CD8-positive, alpha-beta T cell (primary cell): ENCODE measurements at regions of chr3 and their contacts with region 1.

Region 1: DNA sequence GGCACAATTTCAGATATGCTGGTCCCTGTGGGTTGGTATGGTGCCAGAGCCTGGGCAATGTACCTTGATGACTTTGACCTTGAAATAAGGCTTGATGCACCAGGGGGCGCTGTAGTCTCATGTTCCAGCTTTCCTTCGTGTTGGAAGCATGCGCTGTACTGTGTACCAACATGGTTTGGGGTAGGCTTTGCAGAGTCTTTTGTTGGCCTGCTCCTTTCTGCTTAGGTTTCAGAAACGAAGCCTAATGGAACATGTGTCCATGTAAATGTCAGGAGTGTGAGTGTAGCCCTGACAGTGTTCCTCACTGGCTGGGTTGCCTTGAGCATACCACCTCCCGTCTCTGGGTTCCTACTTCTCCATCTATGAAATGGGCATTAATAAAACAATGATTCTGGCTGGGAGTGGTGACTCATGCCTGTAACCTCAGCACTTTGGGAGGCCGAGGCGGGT is 3.6 kb upstream of the CCR4 start:
- DNase-seq: peak; percentile 82 to 96 (median 87)
- ATAC-seq: peak; percentile 79
- H3K4me3 ChIP-seq: no peak overlapping the region
- H3K4me3 Mint-ChIP-seq: no peak overlapping the region
- H3K27ac ChIP-seq: no peak overlapping the region
- H3K27ac Mint-ChIP-seq: no peak overlapping the region
- H3K4me1 ChIP-seq: peaks cover 4% of the 10 kb centered on the region
- H3K4me1 Mint-ChIP-seq: peaks cover 16% of the 10 kb centered on the region
- H3K27me3 ChIP-seq: no peaks in the 10 kb centered on the region
- H3K27me3 Mint-ChIP-seq: no peaks in the 10 kb centered on the region
- CTCF ChIP-seq: peak; percentile 78

Region 2: DNA sequence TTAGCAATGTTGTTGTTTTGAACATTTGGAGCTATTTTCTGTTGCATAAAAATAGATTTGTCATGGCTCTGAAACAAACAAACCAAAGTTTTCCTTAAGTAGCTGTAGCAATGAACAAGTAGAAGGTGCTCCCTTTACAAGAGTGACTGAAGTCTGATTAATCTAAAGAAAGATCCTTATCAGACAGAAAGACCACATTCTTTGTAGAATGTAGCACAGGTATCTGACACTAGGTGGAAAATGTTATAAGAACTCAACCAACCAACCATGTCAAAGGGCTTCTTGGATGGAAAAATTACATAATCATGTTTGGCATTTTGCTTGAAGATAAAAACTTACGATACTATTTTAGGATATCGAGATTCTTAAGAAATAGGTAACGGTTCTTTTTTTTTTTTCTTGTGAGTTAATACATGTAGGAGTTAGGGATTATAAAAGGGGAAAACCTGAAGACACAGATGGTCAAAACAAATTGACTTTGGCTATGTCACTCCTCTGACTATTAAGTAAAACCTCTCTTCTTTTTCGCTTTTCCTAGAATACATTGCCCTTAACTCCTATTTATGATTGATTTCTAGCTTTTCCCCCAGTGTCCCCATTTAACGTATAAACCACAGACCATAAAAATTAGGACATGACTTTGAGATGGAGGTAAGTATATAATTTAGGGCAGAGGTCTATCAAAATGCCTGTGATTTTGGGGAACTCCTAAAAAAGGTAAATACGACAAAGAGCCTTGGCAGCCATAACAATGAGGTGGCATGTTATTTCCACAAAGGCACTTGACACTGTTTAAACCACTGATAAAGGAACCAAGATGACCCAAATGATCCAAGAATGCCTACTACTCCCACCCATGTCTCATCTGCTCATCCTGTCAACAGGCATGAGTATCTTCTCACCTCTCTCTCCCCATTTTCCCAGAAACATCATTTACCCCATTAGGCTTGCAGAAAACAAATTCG is 75.6 kb after region 1 on chr3:
- CTCF ChIA-PET with region 1: interaction called, 24 read pairs
- POLR2A ChIA-PET with region 1: no interaction called
- intact Hi-C with region 1: loop called in 1 of 2 experiments (anchors 5 kb)
- DNase-seq: peak in 1 of 9 experiments; percentile 28
- ATAC-seq: peak; percentile 70
- H3K4me3 ChIP-seq: no peak overlapping the region
- H3K4me3 Mint-ChIP-seq: no peak overlapping the region
- H3K27ac ChIP-seq: no peak overlapping the region
- H3K27ac Mint-ChIP-seq: no peak overlapping the region
- H3K4me1 ChIP-seq: peaks cover 7% of the 10 kb centered on the region
- H3K4me1 Mint-ChIP-seq: peaks cover 28% of the 10 kb centered on the region
- H3K27me3 ChIP-seq: no peaks in the 10 kb centered on the region
- H3K27me3 Mint-ChIP-seq: no peaks in the 10 kb centered on the region
- CTCF ChIP-seq: no peak

Region 3: DNA sequence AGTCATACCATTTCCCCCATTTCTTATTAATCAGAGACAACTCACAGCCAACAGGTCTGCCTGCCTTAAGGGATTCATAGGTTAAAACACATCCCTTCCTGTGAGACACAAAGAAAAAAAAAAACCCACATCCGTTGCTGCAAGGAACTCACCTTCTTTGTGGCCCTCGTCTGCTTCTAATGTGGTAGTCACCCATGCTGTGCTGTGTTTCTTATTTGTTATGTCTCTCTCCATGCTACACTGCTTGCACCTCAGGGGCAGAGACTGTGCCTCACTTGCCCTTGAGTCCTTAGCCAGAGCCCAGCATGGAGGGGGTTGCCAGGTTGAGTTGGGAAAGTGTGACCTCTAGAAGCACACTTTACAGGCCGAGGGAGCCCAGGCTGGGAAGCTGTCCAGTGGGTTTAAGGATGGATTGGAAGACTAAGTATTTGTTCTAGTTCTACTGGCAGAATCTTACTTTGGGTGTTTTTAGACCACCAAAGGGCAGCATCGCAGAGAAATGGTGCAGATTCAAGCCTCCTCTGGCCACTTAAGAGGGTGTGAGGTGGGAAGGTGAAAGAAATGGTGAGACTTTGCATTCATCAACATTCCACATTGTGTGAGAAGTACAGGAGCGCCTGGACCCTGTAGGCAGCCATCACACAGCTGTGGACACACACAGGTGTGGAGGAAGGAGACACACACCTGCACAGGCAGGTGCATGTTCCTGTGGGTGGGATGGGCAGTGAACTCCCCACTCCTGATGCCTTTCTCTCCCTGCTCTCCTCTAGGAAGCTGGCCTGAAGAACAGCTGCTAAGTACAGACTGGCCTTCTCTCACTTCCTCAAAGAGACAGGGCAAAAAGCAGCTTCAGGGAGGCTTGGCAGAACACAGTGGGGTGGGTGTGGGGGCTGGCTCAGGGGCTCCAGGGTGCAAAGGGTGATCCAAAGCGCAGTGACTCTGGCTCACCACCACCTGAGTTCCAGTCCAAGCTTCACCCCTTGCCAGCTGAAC is 100.3 kb after region 1 on chr3:
- CTCF ChIA-PET with region 1: interaction called, 34 read pairs
- POLR2A ChIA-PET with region 1: interaction called, 4 read pairs
- intact Hi-C with region 1: no loop called
- DNase-seq: peak; percentile 21 to 87 (median 58)
- ATAC-seq: peak; percentile 86
- H3K4me3 ChIP-seq: no peak overlapping the region
- H3K4me3 Mint-ChIP-seq: peak overlapping the region; percentile 66
- H3K27ac ChIP-seq: peak overlapping the region in 1 of 2 experiments; percentile 14
- H3K27ac Mint-ChIP-seq: peak overlapping the region; percentile 92
- H3K4me1 ChIP-seq: peaks cover 56% of the 10 kb centered on the region
- H3K4me1 Mint-ChIP-seq: peaks cover 73% of the 10 kb centered on the region
- H3K27me3 ChIP-seq: no peaks in the 10 kb centered on the region
- H3K27me3 Mint-ChIP-seq: no peaks in the 10 kb centered on the region
- CTCF ChIP-seq: no peak

Region 4: GRCh38 chr3:33131331-33132018 is 183.7 kb after region 1 on chr3:
- CTCF ChIA-PET with region 1: interaction called, 11 read pairs
- POLR2A ChIA-PET with region 1: no interaction called
- intact Hi-C with region 1: loop called in 1 of 2 experiments (anchors 10 kb)
- DNase-seq: peak in 4 of 9 experiments; percentile 21 to 61 (median 40)
- ATAC-seq: peak; percentile 69
- H3K4me3 ChIP-seq: no peak overlapping the region
- H3K4me3 Mint-ChIP-seq: no peak overlapping the region
- H3K27ac ChIP-seq: no peak overlapping the region
- H3K27ac Mint-ChIP-seq: no peak overlapping the region
- H3K4me1 ChIP-seq: no peaks in the 10 kb centered on the region
- H3K4me1 Mint-ChIP-seq: peaks cover 3% of the 10 kb centered on the region
- H3K27me3 ChIP-seq: no peaks in the 10 kb centered on the region
- H3K27me3 Mint-ChIP-seq: no peaks in the 10 kb centered on the region
- CTCF ChIP-seq: peak; percentile 84